Activated naive CD4-positive, alpha-beta T cell treated with anti-CD3 and anti-CD28 coated beads for 36 hours (primary cell): ENCODE measurements at regions of chr10 and their contacts with region 1.

Region 1: DNA sequence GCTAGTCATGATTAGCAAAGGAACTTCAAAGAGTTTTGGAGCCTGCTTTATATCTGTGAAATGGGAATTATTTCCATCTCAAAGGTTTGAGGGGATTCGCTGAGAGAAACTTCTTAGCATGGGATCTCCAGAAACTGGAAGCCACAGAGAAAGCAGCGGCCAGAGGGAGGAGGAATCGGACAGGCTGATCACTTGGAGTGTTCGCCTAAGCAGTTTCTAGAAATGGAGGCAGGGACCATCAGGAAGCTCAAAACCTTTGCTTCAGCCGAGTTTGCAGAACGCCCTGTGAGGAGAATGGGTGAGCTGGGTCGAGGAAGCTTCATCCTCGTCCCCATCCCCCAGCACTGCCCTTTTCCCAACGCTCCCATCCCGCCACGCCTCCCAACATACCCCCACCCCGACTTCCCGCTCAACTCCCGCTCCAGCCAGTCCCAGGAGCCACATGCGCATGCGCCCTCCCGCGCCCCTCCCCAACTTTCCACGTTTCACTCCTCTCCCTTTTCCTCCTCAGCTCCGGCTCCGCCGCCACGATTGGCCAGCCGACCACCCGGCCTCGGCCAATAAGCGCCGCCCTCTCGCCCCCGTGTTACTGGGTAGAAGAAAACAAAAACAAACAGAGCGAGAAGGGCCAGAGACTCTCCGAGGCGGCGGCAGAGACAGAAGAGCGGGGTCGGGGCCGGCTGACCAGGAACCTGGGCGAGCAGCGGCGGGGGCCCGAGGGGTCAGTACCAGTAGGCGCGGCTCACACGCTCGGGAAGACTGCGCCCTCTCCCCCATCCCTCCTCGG is at the start of gene PDCD4:
- DNase-seq: peak; percentile 96
- H3K4me3 Mint-ChIP-seq: peak within 1 kb of the TSS; percentile 93
- H3K27ac Mint-ChIP-seq: peak within 1 kb of the TSS; percentile 98
- H3K4me1 Mint-ChIP-seq: peaks cover 61% of the 10 kb centered on the region
- H3K27me3 Mint-ChIP-seq: no peaks in the 10 kb centered on the region
- total RNA-seq, gene PDCD4: 143 to 146 TPM

Region 2: DNA sequence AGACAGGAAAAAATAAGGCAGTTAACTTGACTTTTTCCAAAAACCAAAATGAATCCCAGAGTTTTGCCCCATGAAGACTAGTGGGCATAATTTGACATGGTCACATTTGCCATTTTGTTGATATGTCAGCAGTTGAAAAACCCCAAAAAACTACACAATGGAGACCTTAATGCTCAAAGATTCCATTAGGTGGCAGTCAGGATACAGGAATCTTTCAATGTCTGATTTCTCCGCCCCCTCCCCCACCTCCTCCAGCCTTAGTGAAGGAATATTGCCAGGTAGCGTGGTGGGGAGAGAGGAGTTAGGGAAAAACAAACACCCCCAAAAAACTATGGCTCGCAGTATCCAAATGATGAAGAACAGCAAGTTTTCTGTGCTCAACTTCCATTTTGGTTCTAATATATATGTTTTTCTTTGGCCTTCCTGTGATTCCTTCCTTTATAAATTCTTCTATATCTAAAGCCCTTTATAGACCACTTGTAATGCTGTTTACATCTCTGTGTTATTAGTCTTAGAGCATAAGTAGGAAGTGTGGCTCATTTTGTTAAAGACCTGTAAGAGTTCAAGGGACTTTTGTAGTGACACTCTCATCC is 560.0 kb before region 1 on chr10:
- CTCF ChIA-PET with region 1: no interaction called
- intact Hi-C with region 1: loop called (anchors 5 kb)
- DNase-seq: peak; percentile 61
- H3K4me3 Mint-ChIP-seq: no peak overlapping the region
- H3K27ac Mint-ChIP-seq: no peak overlapping the region
- H3K4me1 Mint-ChIP-seq: peaks cover 28% of the 10 kb centered on the region
- H3K27me3 Mint-ChIP-seq: no peaks in the 10 kb centered on the region

Region 3: GRCh38 chr10:110376021-110376766 is 495.3 kb before region 1 on chr10:
- CTCF ChIA-PET with region 1: no interaction called
- intact Hi-C with region 1: no loop called
- DNase-seq: no peak
- H3K4me3 Mint-ChIP-seq: no peak overlapping the region
- H3K27ac Mint-ChIP-seq: peak overlapping the region; percentile 20
- H3K4me1 Mint-ChIP-seq: peaks cover 37% of the 10 kb centered on the region
- H3K27me3 Mint-ChIP-seq: no peaks in the 10 kb centered on the region

Region 4: DNA sequence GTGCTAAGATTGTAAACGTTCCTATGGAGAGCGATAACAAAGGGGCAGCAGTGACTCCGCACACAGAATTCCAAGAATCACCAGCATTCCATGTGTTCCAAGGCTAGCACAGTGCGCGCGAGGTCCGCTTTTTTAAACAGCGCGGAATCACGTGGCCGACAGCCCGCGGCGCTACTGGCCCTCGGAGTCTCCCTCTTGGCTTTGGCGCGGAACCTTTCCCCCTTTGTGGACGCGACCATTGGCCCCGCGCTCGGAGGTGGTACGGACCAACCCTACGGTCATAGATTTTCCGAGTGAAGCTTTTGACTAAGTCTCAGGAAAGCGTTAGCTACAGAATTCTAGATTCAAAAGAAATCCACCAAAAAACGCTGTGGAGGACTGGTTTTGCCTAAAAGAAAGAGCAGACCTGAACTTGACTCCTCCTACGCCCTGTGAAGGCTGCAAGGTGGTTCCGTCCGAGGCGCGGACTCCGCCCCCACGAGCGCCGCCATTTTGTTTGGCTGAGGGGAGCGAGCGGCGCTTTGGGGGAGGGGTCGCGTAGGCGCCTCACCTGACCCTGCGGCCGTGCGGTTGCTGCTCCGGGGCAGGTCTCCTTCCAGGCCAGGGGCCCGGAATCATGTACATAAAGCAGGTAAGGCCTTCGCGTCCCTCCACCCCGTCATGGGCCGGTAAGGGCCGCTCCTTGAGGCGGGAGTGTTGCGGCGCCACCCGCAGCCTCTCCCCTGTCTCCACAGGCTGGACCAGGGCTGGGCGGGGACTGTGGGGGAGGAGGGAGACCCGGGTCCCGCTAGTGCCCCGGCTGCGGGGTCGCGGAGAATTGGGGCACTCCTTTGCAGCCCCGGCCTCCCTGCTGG is 304.1 kb before region 1 on chr10 and contains the start of gene SMC3:
- CTCF ChIA-PET with region 1: no interaction called
- intact Hi-C with region 1: loop called (anchors 5 kb)
- DNase-seq: peak; percentile 95
- H3K4me3 Mint-ChIP-seq: peak within 1 kb of the TSS; percentile 87
- H3K27ac Mint-ChIP-seq: peak within 1 kb of the TSS; percentile 98
- H3K4me1 Mint-ChIP-seq: peaks cover 31% of the 10 kb centered on the region
- H3K27me3 Mint-ChIP-seq: peaks cover 5% of the 10 kb centered on the region
- total RNA-seq, gene SMC3: 81.3 to 85.0 TPM

Region 5: GRCh38 chr10:110834629-110835301 is 36.7 kb before region 1 on chr10:
- CTCF ChIA-PET with region 1: no interaction called
- intact Hi-C with region 1: loop called (anchors 1 kb)
- DNase-seq: peak; percentile 58
- H3K4me3 Mint-ChIP-seq: no peak overlapping the region
- H3K27ac Mint-ChIP-seq: peak overlapping the region; percentile 47
- H3K4me1 Mint-ChIP-seq: peaks cover 39% of the 10 kb centered on the region
- H3K27me3 Mint-ChIP-seq: no peaks in the 10 kb centered on the region

Region 6: DNA sequence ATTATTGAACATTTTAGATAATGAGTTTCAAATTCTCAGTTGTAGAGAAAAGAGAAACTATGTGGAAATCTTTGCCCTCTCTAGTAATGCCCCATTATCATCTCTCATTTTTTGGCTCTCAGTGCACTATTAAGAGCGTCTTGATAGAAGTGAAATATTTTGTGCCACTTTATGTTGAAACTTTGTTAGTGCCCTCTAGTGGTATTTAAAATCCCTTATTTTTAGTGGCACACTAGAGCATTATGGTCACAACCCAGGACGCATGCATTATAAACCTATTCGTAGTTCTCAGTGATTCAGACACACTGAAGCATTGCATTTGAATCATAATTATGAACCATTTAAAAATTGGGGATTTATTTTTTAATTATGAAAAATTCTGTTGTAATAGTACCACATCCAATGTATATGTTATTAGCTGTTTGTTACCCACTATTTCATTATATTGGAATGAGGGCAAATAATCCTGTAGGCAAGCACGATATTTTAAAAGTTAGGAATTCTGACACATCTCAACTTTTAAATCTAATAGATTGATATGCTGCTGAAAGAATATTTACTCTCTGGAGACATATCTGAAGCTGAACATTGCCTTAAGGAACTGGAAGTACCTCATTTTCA is 22.2 kb after region 1 on chr10:
- CTCF ChIA-PET with region 1: interaction called, 13 read pairs
- intact Hi-C with region 1: loop called (anchors 1 kb)
- DNase-seq: no peak
- H3K4me3 Mint-ChIP-seq: no peak overlapping the region
- H3K27ac Mint-ChIP-seq: no peak overlapping the region
- H3K4me1 Mint-ChIP-seq: peaks cover 42% of the 10 kb centered on the region
- H3K27me3 Mint-ChIP-seq: no peaks in the 10 kb centered on the region